ENCODE measurements at regions of chr7 and their contacts with region 1.

Region 1: DNA sequence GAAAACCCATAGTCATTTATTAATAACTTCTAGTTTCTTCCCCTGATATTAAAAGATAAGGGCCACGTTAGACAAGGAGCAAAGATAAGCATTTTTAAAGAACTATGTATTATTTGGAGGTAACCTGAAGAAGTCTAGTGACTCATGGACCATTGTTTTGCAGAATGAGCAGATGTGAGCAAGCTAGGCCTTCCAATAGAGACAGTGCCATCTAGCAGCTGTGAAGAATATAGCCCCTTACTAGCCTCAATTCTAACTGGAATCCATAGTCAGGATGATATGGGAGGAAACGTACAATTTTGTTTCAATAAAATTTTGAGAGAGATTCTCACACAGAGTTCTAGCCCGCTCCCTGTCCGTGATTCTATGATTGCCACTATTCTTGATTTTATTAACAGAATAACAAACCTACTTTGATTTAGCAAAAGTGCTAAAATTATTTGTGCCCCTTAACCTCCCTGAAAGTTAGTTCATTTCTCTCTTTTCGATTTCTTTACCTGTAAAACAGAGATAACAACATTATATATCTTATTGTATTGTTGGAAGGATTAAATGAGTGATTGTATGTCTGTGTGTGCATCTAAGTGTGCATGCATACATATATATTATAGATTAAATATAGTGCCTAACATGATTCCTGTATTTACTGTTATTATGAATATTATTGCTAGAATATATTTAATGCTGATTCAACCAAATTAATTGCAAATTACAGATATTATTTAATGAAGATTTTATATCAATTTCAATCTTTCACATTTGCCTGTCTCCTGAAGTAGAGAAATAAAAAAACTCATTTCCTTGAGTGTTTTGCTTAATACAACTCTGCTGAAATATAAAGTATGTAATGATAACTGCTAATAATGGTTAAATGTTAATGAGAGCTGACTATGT is 22.7 kb downstream of the FAM237B start:
- DNase-seq: peak in 1 of 5 donors; percentile 7
- H3K4me3 ChIP-seq: no peak overlapping the region
- H3K4me3 Mint-ChIP-seq: no peak overlapping the region
- H3K27ac ChIP-seq: no peak overlapping the region
- H3K27ac Mint-ChIP-seq: no peak overlapping the region
- H3K4me1 ChIP-seq: no peaks in the 10 kb centered on the region
- H3K4me1 Mint-ChIP-seq: no peaks in the 10 kb centered on the region
- H3K27me3 ChIP-seq: no peaks in the 10 kb centered on the region
- H3K27me3 Mint-ChIP-seq: peaks cover 2 to 5% of the 10 kb centered on the region in 2 donors

Region 2: GRCh38 chr7:90403174-90404113 is 105.1 kb after region 1 on chr7 and contains the start of gene CLDN12:
- CTCF ChIA-PET with region 1: no interaction called
- POLR2A ChIA-PET with region 1: no interaction called
- intact Hi-C with region 1: no loop called
- DNase-seq: peak; percentile 78 to 94 (median 82)
- H3K4me3 ChIP-seq: peak within 1 kb of the TSS; percentile 89 to 90
- H3K4me3 Mint-ChIP-seq: peak within 1 kb of the TSS; percentile 92 to 98 (median 96)
- H3K27ac ChIP-seq: peak within 1 kb of the TSS; percentile 72
- H3K27ac Mint-ChIP-seq: peak within 1 kb of the TSS; percentile 92 to 98 (median 96)
- H3K4me1 ChIP-seq: peaks cover 10% of the 10 kb centered on the region
- H3K4me1 Mint-ChIP-seq: peaks cover 7 to 21% (median 13%) of the 10 kb centered on the region in 4 donors
- H3K27me3 ChIP-seq: no peaks in the 10 kb centered on the region
- H3K27me3 Mint-ChIP-seq: no peaks in the 10 kb centered on the region
- total RNA-seq, gene CLDN12: 5.7 to 6.1 TPM

Region 3: DNA sequence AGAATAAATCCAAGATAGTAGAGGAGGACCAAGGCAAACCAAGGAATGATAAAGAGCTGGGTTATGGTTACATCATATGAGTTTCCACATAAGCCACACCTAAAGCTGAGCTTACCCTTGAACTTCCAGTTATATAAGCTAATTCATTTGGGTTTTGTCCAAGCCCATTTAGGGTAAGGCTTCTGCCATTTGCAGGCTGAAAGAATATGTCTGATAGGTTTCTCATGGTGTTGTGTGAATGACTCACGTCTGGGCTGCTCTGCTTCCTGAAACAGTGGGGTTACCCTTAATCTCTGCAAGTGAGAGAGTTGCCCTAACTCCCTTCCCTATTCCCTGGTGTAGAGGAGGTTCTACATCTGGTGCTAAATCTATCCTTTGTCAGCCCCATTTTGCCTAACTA is 231.9 kb after region 1 on chr7:
- CTCF ChIA-PET with region 1: no interaction called
- POLR2A ChIA-PET with region 1: no interaction called
- intact Hi-C with region 1: no loop called
- DNase-seq: no peak
- H3K4me3 ChIP-seq: no peak overlapping the region
- H3K4me3 Mint-ChIP-seq: no peak overlapping the region
- H3K27ac ChIP-seq: no peak overlapping the region
- H3K27ac Mint-ChIP-seq: no peak overlapping the region
- H3K4me1 ChIP-seq: no peaks in the 10 kb centered on the region
- H3K4me1 Mint-ChIP-seq: no peaks in the 10 kb centered on the region
- H3K27me3 ChIP-seq: no peaks in the 10 kb centered on the region
- H3K27me3 Mint-ChIP-seq: peaks cover 7 to 9% of the 10 kb centered on the region in 2 donors

Region 4: DNA sequence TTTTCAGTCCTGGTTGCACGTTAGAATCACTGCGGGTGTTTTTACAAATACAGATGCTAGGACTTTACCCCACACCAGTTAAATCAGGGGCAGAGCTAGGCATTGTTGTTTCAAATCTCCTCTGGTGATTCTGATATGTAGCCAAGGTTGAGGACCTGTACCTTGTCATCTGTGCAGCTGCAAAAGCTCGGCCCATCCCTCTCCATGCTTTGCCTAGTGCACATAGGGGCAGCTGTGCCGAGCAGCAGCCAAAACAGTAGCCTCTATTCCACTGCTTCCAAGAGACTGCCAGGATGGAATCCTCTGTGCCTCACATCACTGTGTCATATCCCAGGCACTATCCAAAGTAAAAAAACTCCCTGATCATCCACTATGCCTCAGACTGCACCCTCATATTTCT is 479.1 kb after region 1 on chr7:
- CTCF ChIA-PET with region 1: no interaction called
- POLR2A ChIA-PET with region 1: no interaction called
- intact Hi-C with region 1: loop called (anchors 10 kb)
- DNase-seq: no peak
- H3K4me3 ChIP-seq: no peak overlapping the region
- H3K4me3 Mint-ChIP-seq: no peak overlapping the region
- H3K27ac ChIP-seq: no peak overlapping the region
- H3K27ac Mint-ChIP-seq: no peak overlapping the region
- H3K4me1 ChIP-seq: no peaks in the 10 kb centered on the region
- H3K4me1 Mint-ChIP-seq: no peaks in the 10 kb centered on the region
- H3K27me3 ChIP-seq: no peaks in the 10 kb centered on the region
- H3K27me3 Mint-ChIP-seq: no peaks in the 10 kb centered on the region